ENCODE measurements at regions of chr14 and their contacts with region 1.

Region 1: GRCh38 chr14:92793709-92794546 is at the start of gene GOLGA5:
- DNase-seq: peak; percentile 98
- H3K4me3 Mint-ChIP-seq: peak within 1 kb of the TSS; percentile 99
- H3K27ac Mint-ChIP-seq: peak within 1 kb of the TSS; percentile 92
- H3K4me1 Mint-ChIP-seq: peaks cover 39% of the 10 kb centered on the region
- H3K27me3 Mint-ChIP-seq: no peaks in the 10 kb centered on the region
- total RNA-seq, gene GOLGA5: 14.5 to 14.7 TPM

Region 2: GRCh38 chr14:92121670-92122350 is 672.1 kb before region 1 on chr14 and contains the starts of genes CPSF2 and NDUFB1:
- CTCF ChIA-PET with region 1: no interaction called
- intact Hi-C with region 1: loop called (anchors 1 kb)
- DNase-seq: peak; percentile 90
- H3K4me3 Mint-ChIP-seq: peak within 1 kb of the TSS; percentile 99
- H3K27ac Mint-ChIP-seq: peak within 1 kb of the TSS; percentile 100
- H3K4me1 Mint-ChIP-seq: peaks cover 41% of the 10 kb centered on the region
- H3K27me3 Mint-ChIP-seq: no peaks in the 10 kb centered on the region
- total RNA-seq, gene CPSF2: 103 to 115 TPM
- total RNA-seq, gene NDUFB1: 111 to 114 TPM

Region 3: GRCh38 chr14:92625213-92625612 is 168.7 kb before region 1 on chr14:
- CTCF ChIA-PET with region 1: no interaction called
- intact Hi-C with region 1: no loop called
- DNase-seq: no peak
- H3K4me3 Mint-ChIP-seq: no peak overlapping the region
- H3K27ac Mint-ChIP-seq: no peak overlapping the region
- H3K4me1 Mint-ChIP-seq: no peaks in the 10 kb centered on the region
- H3K27me3 Mint-ChIP-seq: no peaks in the 10 kb centered on the region

Region 4: DNA sequence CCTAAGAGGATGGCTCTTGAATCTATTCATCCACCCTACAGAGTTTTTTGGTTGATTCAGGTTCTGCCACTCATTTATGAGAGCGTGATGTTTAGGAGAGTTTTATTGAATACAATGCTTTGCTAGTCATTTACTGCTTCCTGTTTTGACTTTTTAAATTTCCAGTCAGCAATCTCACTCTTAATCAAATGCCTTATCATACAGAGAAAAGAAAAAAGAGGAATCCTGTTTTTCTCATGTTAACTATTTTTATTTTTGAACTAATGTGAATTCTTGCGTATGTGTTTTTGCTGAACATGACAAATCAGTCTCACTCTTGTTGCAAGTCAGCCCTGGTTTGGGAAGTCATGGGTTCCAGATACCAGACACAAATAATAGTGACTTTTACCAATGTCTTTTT is 23.4 kb before region 1 on chr14:
- CTCF ChIA-PET with region 1: interaction called, 3 read pairs
- intact Hi-C with region 1: loop called (anchors 2 kb)
- DNase-seq: no peak
- H3K4me3 Mint-ChIP-seq: no peak overlapping the region
- H3K27ac Mint-ChIP-seq: no peak overlapping the region
- H3K4me1 Mint-ChIP-seq: peaks cover 22% of the 10 kb centered on the region
- H3K27me3 Mint-ChIP-seq: no peaks in the 10 kb centered on the region

Region 5: DNA sequence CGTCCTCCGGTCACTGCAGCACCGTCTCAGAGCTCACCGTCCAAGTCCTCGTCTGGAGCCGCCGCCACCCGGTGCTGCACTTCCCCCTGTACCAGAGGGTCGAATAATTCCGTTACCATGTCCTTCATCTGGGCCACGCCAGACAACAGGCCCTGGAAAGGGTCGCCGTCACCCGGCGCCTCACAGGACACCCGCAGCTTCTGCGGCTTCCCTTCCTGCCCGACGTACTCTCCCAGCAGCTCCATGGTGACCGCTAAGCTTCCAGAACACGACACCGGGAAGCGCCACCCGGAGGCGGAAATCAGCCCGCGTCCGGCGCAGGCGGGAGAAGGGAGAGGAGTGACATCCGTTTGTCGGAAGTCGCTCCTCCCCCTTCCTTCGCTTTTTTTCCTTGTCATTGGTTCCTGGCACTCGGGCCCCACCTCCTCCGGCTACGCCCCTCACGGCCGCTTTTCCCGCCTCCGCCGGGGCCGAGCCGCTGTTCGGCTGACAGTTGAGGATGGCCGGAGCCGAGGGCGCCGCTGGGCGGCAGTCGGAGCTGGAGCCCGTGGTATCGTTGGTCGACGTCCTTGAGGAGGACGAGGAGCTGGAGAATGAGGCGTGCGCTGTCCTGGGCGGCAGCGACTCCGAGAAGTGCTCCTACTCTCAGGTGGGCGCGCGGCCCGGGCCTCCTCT is 413.0 kb after region 1 on chr14 and contains the starts of genes GON7 and UBR7:
- CTCF ChIA-PET with region 1: no interaction called
- intact Hi-C with region 1: loop called (anchors 1 kb)
- DNase-seq: peak; percentile 95
- H3K4me3 Mint-ChIP-seq: peak within 1 kb of the TSS; percentile 92
- H3K27ac Mint-ChIP-seq: peak within 1 kb of the TSS; percentile 83
- H3K4me1 Mint-ChIP-seq: peaks cover 32% of the 10 kb centered on the region
- H3K27me3 Mint-ChIP-seq: no peaks in the 10 kb centered on the region
- total RNA-seq, gene GON7: 4.8 to 7.0 TPM
- total RNA-seq, gene UBR7: 43.0 to 45.0 TPM

Measured in activated naive CD4-positive, alpha-beta T cell treated with anti-CD3 and anti-CD28 coated beads for 36 hours (primary cell).